ENCODE measurements at regions of chr2 and their contacts with region 1.

Region 1: GRCh38 chr2:7725171-7725849 is 808.1 kb downstream of the RNF144A start:
- DNase-seq: peak; percentile 65 to 74 (median 69)
- H3K4me3 ChIP-seq: peak overlapping the region in 1 of 2 donors; percentile 13
- H3K4me3 Mint-ChIP-seq: peak overlapping the region; percentile 53 to 92 (median 80)
- H3K27ac ChIP-seq: peak overlapping the region; percentile 26
- H3K27ac Mint-ChIP-seq: peak overlapping the region; percentile 68 to 97 (median 88)
- H3K4me1 ChIP-seq: peaks cover 40% of the 10 kb centered on the region
- H3K4me1 Mint-ChIP-seq: peaks cover 29 to 77% (median 54%) of the 10 kb centered on the region in 4 donors
- H3K27me3 ChIP-seq: no peaks in the 10 kb centered on the region
- H3K27me3 Mint-ChIP-seq: no peaks in the 10 kb centered on the region

Region 2: GRCh38 chr2:7450188-7450832 is 275.0 kb before region 1 on chr2:
- CTCF ChIA-PET with region 1: no interaction called
- POLR2A ChIA-PET with region 1: interaction called, 14 read pairs
- intact Hi-C with region 1: no loop called
- DNase-seq: peak; percentile 54 to 72 (median 59)
- H3K4me3 ChIP-seq: no peak overlapping the region
- H3K4me3 Mint-ChIP-seq: peak overlapping the region in 7 of 8 donors; percentile 60 to 83 (median 67)
- H3K27ac ChIP-seq: no peak overlapping the region
- H3K27ac Mint-ChIP-seq: peak overlapping the region; percentile 85 to 95 (median 93)
- H3K4me1 ChIP-seq: peaks cover 60% of the 10 kb centered on the region
- H3K4me1 Mint-ChIP-seq: peaks cover 44 to 66% (median 57%) of the 10 kb centered on the region in 4 donors
- H3K27me3 ChIP-seq: no peaks in the 10 kb centered on the region
- H3K27me3 Mint-ChIP-seq: no peaks in the 10 kb centered on the region

Region 3: DNA sequence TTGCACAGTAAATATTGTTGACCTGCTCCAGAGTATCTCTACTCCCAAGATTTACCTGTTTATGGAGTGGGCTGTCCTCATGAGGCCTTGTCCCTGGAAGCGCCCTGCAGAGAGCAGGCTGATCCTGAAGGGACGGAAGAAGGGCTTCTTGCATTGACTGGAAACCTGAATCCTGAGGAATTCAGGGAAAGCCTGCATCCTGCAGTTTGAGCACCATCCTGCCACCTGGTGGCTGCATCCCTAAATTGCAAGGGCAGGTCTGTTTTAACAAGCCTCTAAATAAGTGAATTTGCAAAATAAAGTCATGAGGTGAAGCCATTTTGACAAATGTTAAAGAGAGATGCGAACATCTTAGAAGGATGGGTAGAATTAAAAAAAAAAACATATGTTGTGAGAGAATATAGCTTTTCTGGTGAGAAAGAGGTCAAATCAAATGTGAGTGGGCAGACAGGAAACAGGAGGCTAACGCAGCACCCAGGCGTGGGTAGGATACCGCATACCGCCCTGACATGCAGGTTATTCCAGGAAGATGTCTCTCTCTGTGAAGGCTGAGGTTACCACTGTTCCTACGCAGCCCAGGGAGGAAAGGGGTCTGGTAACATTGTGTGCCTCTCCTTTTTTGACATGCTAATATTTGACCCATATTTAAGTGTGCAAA is 53.2 kb before region 1 on chr2:
- CTCF ChIA-PET with region 1: interaction called, 15 read pairs
- POLR2A ChIA-PET with region 1: interaction called, 3 read pairs
- intact Hi-C with region 1: no loop called
- DNase-seq: peak in 4 of 5 donors; percentile 37 to 43 (median 43)
- H3K4me3 ChIP-seq: no peak overlapping the region
- H3K4me3 Mint-ChIP-seq: peak overlapping the region; percentile 3 to 82 (median 68)
- H3K27ac ChIP-seq: no peak overlapping the region
- H3K27ac Mint-ChIP-seq: peak overlapping the region; percentile 75 to 93 (median 89)
- H3K4me1 ChIP-seq: peaks cover 19% of the 10 kb centered on the region
- H3K4me1 Mint-ChIP-seq: peaks cover 19 to 36% (median 25%) of the 10 kb centered on the region in 4 donors
- H3K27me3 ChIP-seq: no peaks in the 10 kb centered on the region
- H3K27me3 Mint-ChIP-seq: no peaks in the 10 kb centered on the region

Region 4: DNA sequence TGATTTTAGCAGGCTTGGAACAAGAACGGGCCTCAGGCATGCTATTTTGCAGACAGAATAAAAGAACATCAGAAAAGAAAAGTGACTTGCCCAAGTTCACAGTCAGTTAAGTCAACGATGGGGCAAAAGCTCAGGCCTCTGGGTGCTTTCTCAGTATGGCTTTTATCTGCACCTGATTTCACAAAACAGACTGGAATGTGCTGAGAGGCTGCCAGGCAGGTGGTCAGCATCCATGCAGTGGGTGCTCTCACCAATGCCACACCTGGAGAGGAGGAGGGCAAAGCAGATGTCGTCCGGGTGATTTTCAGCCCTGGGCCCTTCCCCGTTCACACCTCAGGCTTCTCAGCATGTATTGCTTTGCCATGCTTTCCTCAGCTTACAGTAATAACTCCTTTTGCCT is 46.5 kb after region 1 on chr2:
- CTCF ChIA-PET with region 1: no interaction called
- POLR2A ChIA-PET with region 1: no interaction called
- intact Hi-C with region 1: no loop called
- DNase-seq: no peak
- H3K4me3 ChIP-seq: no peak overlapping the region
- H3K4me3 Mint-ChIP-seq: no peak overlapping the region
- H3K27ac ChIP-seq: no peak overlapping the region
- H3K27ac Mint-ChIP-seq: no peak overlapping the region
- H3K4me1 ChIP-seq: peaks cover 17% of the 10 kb centered on the region
- H3K4me1 Mint-ChIP-seq: peaks cover 7 to 22% (median 12%) of the 10 kb centered on the region in 4 donors
- H3K27me3 ChIP-seq: no peaks in the 10 kb centered on the region
- H3K27me3 Mint-ChIP-seq: no peaks in the 10 kb centered on the region

Region 5: DNA sequence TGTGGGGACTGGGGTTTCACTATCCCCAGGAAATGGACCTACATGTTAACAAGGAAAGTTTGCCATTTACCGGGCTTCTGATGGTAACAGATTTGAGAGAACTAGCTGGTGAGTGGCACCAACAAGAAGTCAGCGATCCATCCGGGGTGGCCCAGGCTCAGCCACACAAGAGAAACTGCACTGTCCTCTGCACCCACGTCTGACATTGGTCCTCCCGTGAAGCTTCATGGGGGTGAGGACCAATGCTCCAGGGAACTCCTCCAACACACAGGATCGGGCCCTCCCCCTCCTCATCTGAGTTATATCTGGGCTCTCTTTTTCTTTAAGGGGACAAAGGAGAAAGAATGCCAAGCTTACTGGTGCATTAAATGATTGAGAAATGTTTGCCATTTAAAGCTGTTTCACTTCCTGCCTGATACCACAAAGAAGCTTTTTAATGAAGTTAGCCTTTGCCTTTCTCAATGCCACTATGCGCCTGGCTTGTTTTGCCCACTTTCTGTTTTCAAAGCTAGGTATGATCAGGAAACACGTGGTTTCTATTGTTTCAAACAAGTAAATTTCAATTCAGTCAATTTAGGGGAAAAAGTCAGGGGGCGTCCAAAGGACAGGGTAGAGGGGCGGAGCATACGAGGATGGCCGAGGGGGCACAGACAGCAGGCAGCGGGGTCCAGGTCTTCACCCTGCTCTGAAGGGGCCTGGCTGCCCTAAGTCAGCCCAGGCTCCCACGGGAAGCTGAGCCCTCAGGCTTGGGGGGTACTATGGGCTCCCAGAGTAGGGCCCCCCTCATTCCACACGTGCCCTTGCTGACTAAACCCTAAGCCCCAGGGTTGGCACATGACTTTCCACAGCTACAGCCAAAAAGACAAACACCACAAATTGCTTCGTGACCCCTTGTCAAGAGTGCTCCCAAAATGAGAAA is 752.5 kb after region 1 on chr2:
- CTCF ChIA-PET with region 1: interaction called, 3 read pairs
- POLR2A ChIA-PET with region 1: interaction called, 4 read pairs
- intact Hi-C with region 1: loop called (anchors 5 kb)
- DNase-seq: peak; percentile 55 to 66 (median 60)
- H3K4me3 ChIP-seq: peak overlapping the region; percentile 27 to 41
- H3K4me3 Mint-ChIP-seq: peak overlapping the region; percentile 75 to 94 (median 82)
- H3K27ac ChIP-seq: peak overlapping the region; percentile 70
- H3K27ac Mint-ChIP-seq: peak overlapping the region; percentile 92 to 98 (median 96)
- H3K4me1 ChIP-seq: peaks cover 95% of the 10 kb centered on the region
- H3K4me1 Mint-ChIP-seq: peaks cover 66 to 100% (median 88%) of the 10 kb centered on the region in 4 donors
- H3K27me3 ChIP-seq: no peaks in the 10 kb centered on the region
- H3K27me3 Mint-ChIP-seq: no peaks in the 10 kb centered on the region